ENCODE measurements at regions of chr12 and their contacts with region 1.

Region 1: DNA sequence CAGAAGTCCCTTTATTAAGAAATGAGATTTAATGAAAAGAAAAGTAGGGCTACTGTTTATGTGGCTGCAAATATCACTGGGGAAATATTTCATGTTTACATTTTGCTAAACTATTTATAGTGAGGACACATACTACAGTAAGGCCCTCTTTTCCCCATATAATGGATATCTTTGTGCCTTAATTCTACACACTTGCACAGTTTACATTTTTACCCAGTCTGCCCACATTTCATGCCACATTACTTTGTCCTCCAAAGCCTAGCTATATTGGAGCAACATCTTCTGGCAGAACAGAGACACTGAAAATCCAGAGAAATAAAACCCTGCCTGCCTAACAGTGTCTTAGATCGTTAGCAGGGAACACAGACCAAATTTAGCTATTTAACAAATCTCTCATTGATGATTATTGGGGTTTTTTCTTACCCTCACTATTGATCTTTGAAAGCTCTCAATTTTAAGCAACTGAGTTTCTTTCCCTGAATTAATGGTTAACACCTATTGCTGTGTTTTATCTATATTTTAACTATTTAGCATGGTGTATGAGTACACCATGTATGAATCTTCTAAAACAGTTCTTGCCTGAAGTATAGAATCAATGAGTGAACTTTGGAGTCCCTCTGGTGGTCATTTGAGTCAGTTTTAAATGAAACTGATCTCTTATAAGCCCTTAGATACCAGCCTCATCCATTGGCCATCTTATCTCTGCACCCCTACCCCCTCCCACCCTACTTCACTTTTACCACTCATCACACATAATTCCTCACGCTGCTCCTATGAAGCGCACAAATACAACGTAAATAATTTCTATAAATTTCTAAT is 170.2 kb downstream of the BCAT1 start:
- DNase-seq: peak in 1 of 2 experiments; percentile 65
- H3K4me3 ChIP-seq: no peak overlapping the region
- H3K4me3 Mint-ChIP-seq: no peak overlapping the region
- H3K27ac Mint-ChIP-seq: peak overlapping the region; percentile 42
- H3K4me1 ChIP-seq: peaks cover 24% of the 10 kb centered on the region
- H3K4me1 Mint-ChIP-seq: peaks cover 37% of the 10 kb centered on the region
- H3K27me3 ChIP-seq: no peaks in the 10 kb centered on the region
- H3K27me3 Mint-ChIP-seq: no peaks in the 10 kb centered on the region
- CTCF ChIP-seq: peak; percentile 72 to 90

Region 2: DNA sequence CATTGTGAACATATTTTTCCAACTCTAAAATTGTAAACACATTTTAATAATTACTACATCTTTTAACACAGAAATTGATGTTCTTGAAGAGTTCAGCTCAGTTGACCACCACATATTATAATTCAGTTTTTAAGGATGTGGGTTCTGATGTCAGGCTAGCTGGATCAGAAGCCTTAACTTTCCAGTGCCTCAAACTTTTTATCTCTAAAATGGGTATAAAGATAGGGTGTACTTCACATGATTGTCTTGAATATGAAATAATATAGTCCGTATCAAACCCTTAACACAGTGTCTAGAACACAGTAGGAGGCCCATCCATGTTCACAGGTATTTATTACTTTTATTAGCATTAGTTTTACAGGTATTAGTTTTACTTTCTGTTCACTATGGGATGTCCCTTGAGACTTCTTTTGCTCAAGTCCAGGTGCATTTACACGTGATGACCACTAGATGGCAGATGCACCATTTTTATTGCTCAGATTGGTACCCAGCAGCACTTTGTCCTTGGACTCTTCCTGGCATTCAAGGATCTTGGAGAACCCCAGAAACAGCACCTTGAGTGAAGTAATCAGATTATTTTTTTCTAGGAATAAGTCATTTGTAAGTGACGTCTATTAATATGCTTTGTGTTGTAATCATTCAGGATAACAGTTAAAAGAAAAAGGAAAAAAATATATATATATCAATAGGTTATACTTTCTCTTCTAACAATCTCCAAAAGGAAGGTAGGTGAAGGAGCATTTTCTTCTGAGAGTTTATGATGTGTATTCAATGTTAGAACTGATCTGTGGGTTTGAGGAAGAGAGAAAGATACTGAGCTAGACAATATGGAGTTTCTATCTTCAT is 1573.5 kb before region 1 on chr12:
- CTCF ChIA-PET with region 1: no interaction called
- POLR2A ChIA-PET with region 1: no interaction called
- intact Hi-C with region 1: loop called (anchors 1 kb)
- DNase-seq: peak in 1 of 2 experiments; percentile 56
- H3K4me3 ChIP-seq: no peak overlapping the region
- H3K4me3 Mint-ChIP-seq: no peak overlapping the region
- H3K27ac Mint-ChIP-seq: no peak overlapping the region
- H3K4me1 ChIP-seq: no peaks in the 10 kb centered on the region
- H3K4me1 Mint-ChIP-seq: no peaks in the 10 kb centered on the region
- H3K27me3 ChIP-seq: no peaks in the 10 kb centered on the region
- H3K27me3 Mint-ChIP-seq: peaks cover 14% of the 10 kb centered on the region
- CTCF ChIP-seq: peak; percentile 88 to 96

Region 3: GRCh38 chr12:24268663-24269186 is 510.0 kb before region 1 on chr12:
- CTCF ChIA-PET with region 1: no interaction called
- POLR2A ChIA-PET with region 1: no interaction called
- intact Hi-C with region 1: loop called (anchors 1 kb)
- DNase-seq: no peak
- H3K4me3 ChIP-seq: no peak overlapping the region
- H3K4me3 Mint-ChIP-seq: no peak overlapping the region
- H3K27ac Mint-ChIP-seq: no peak overlapping the region
- H3K4me1 ChIP-seq: 0 out of 2 replicates have a peak, but pooled peaks cover 5% of the 10 kb centered on the region
- H3K4me1 Mint-ChIP-seq: no peaks in the 10 kb centered on the region
- H3K27me3 ChIP-seq: no peaks in the 10 kb centered on the region
- H3K27me3 Mint-ChIP-seq: no peaks in the 10 kb centered on the region
- CTCF ChIP-seq: peak; percentile 1 to 53

Region 4: GRCh38 chr12:24561882-24562760 is 216.6 kb before region 1 on chr12:
- CTCF ChIA-PET with region 1: interaction called, 3 read pairs
- POLR2A ChIA-PET with region 1: no interaction called
- intact Hi-C with region 1: loop called (anchors 2 kb)
- DNase-seq: peak; percentile 74 to 82
- H3K4me3 ChIP-seq: peak overlapping the region; percentile 84
- H3K4me3 Mint-ChIP-seq: peak overlapping the region; percentile 94
- H3K27ac Mint-ChIP-seq: peak overlapping the region; percentile 73
- H3K4me1 ChIP-seq: peaks cover 41% of the 10 kb centered on the region; the same call in 1 of the 2 replicates
- H3K4me1 Mint-ChIP-seq: peaks cover 30% of the 10 kb centered on the region
- H3K27me3 ChIP-seq: no peaks in the 10 kb centered on the region
- H3K27me3 Mint-ChIP-seq: no peaks in the 10 kb centered on the region
- CTCF ChIP-seq: no peak

Region 5: DNA sequence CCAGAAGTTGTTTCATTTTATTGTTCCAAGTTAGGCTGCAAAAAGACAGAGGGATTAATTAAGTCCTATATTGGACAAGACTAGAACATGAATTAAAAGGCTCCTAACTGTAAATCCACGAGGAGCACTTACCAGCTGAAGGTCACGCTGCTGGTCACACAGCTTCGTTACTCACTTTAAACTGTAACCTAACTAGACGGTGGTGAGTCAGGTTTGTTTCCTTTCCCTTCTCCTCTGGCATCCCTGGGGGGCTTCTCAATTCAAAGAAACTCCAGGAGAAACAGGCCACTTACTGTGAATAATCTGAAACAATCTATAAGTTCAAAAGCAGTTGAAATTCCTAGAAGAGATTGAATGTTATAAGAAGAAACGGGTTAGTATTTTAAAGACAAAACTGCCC is 161.2 kb before region 1 on chr12:
- CTCF ChIA-PET with region 1: interaction called, 4 read pairs
- POLR2A ChIA-PET with region 1: no interaction called
- intact Hi-C with region 1: loop called (anchors 5 kb)
- DNase-seq: no peak
- H3K4me3 ChIP-seq: no peak overlapping the region
- H3K4me3 Mint-ChIP-seq: peak overlapping the region; percentile 65
- H3K27ac Mint-ChIP-seq: peak overlapping the region; percentile 87
- H3K4me1 ChIP-seq: peaks cover 27% of the 10 kb centered on the region
- H3K4me1 Mint-ChIP-seq: peaks cover 31% of the 10 kb centered on the region
- H3K27me3 ChIP-seq: no peaks in the 10 kb centered on the region
- H3K27me3 Mint-ChIP-seq: no peaks in the 10 kb centered on the region
- CTCF ChIP-seq: no peak

Region 6: GRCh38 chr12:24695657-24696329 is 82.9 kb before region 1 on chr12:
- CTCF ChIA-PET with region 1: no interaction called
- POLR2A ChIA-PET with region 1: no interaction called
- intact Hi-C with region 1: no loop called
- DNase-seq: no peak
- H3K4me3 ChIP-seq: no peak overlapping the region
- H3K4me3 Mint-ChIP-seq: no peak overlapping the region
- H3K27ac Mint-ChIP-seq: no peak overlapping the region
- H3K4me1 ChIP-seq: peaks cover 31% of the 10 kb centered on the region
- H3K4me1 Mint-ChIP-seq: peaks cover 22% of the 10 kb centered on the region
- H3K27me3 ChIP-seq: no peaks in the 10 kb centered on the region
- H3K27me3 Mint-ChIP-seq: no peaks in the 10 kb centered on the region
- CTCF ChIP-seq: no peak

Region 7: DNA sequence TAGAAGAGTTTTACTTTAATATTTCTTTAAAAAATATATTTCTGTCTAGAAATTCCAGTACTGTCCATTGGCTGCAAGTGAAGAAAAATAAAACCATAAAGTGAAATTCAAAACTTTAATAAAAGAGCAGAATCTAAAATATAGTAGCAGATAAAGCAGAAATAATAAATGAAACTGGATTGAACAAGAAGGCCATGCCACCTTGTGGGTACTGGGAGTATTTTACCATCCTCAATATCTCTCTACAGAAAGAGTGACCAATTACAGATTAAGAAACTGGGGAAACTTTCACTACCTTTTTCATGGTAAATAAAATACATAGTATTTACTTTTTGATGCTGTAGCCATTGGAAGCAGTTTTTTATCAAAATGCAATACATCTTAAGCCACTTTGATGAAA is 50.3 kb before region 1 on chr12:
- CTCF ChIA-PET with region 1: no interaction called
- POLR2A ChIA-PET with region 1: no interaction called
- intact Hi-C with region 1: loop called (anchors 1 kb)
- DNase-seq: peak in 1 of 2 experiments; percentile 42
- H3K4me3 ChIP-seq: no peak overlapping the region
- H3K4me3 Mint-ChIP-seq: no peak overlapping the region
- H3K27ac Mint-ChIP-seq: no peak overlapping the region
- H3K4me1 ChIP-seq: peaks cover 6% of the 10 kb centered on the region; the same call in 1 of the 2 replicates
- H3K4me1 Mint-ChIP-seq: peaks cover 8% of the 10 kb centered on the region
- H3K27me3 ChIP-seq: no peaks in the 10 kb centered on the region
- H3K27me3 Mint-ChIP-seq: no peaks in the 10 kb centered on the region
- CTCF ChIP-seq: peak; percentile 63 to 84

Region 8: DNA sequence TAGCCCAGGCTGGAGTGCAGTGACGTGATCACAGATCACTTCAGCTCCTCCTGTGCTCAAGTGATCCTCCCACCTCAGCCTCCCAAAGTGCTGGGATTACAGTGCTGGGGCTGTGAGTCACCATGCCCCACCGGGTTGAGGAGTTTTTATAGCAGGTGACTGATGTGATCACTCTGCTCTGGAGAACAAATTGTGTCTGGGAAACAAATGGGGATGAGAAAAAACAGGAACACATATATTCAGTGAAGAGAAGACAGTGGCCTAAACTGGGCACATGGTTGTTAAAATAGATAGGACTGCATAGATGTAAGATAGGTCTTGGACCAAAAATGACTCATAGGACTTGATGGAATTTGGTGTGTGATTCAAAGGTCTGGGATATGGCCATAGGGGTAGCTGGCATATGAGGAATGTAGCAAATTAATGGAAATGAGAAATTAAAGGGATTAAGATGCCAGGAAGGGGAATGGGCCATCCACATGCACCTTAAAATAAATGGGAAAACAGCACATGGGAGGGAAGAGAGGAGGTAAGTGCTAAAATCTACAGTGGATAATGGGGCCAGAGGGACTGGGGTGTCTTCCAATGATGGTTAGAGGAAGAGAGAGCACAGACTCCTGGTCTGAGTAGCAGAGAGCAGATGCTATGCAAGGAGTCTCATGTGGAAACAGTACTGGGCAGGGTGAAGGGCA is 159.0 kb after region 1 on chr12:
- CTCF ChIA-PET with region 1: no interaction called
- POLR2A ChIA-PET with region 1: no interaction called
- intact Hi-C with region 1: no loop called
- DNase-seq: no peak
- H3K4me3 ChIP-seq: no peak overlapping the region
- H3K4me3 Mint-ChIP-seq: no peak overlapping the region
- H3K27ac Mint-ChIP-seq: no peak overlapping the region
- H3K4me1 ChIP-seq: peaks cover 19% of the 10 kb centered on the region
- H3K4me1 Mint-ChIP-seq: peaks cover 10% of the 10 kb centered on the region
- H3K27me3 ChIP-seq: no peaks in the 10 kb centered on the region
- H3K27me3 Mint-ChIP-seq: no peaks in the 10 kb centered on the region
- CTCF ChIP-seq: no peak